ENCODE measurements at regions of chr5 and their contacts with region 1.

Region 1: DNA sequence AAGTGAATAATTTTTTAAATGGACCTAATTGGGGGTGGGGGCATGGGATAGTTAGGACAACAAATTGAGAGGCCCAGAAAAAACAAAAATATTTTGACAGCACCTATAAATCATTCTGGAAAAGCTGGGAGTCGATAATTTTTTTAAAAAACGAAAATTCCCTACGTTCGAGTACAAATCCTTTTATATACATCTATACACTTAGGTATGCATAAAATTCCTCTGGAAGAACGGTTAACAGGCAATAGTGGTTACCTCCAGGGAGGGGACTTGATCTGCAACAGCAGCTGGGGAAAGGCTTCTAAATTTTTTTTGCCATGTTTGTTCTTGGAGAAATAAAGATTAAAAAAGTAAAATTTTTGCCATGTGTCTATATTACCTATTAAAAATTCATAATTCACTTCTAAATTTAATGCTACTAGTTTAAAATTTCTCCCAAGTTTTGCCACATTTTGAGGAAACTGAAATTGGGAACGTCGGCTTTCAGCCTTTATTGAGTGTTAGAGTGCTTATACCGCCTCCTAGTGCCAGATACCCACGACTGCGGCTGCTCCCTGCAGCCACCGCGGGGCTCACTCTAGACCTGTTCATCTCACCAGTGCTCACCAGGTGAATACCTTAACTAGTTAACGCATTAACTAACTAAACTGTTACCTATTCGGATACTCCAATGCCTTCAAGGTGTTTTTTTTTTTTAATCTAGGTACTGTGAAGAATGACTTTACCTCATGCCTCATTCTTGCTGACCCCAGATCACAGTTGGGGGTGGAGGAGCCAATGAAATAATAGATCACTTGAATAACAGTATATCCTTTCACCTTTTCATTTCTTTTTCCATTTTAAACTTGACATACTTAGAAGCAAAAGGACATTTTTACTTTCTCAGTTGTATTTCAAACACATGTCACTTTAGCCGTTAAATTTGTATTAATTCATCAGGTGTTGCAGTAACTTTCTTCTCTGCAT is 1.8 kb upstream of the BHMT start:
- DNase-seq: no peak
- ATAC-seq: peak; percentile 42
- H3K4me3 Mint-ChIP-seq: no peak overlapping the region
- H3K27ac Mint-ChIP-seq: no peak overlapping the region
- H3K4me1 Mint-ChIP-seq: no peaks in the 10 kb centered on the region
- H3K27me3 Mint-ChIP-seq: peaks cover 57% of the 10 kb centered on the region
- CTCF ChIP-seq: no peak

Region 2: GRCh38 chr5:78537821-78538220 is 572.0 kb before region 1 on chr5:
- CTCF ChIA-PET with region 1: no interaction called
- POLR2A ChIA-PET with region 1: no interaction called
- intact Hi-C with region 1: loop called (anchors 5 kb)
- DNase-seq: no peak
- ATAC-seq: peak; percentile 80
- H3K4me3 Mint-ChIP-seq: no peak overlapping the region
- H3K27ac Mint-ChIP-seq: no peak overlapping the region
- H3K4me1 Mint-ChIP-seq: peaks cover 10% of the 10 kb centered on the region
- H3K27me3 Mint-ChIP-seq: no peaks in the 10 kb centered on the region
- CTCF ChIP-seq: no peak

Region 3: GRCh38 chr5:79069488-79070349 is 40.1 kb before region 1 on chr5 and contains the starts of genes BHMT2 and DMGDH:
- CTCF ChIA-PET with region 1: no interaction called
- POLR2A ChIA-PET with region 1: no interaction called
- intact Hi-C with region 1: no loop called
- DNase-seq: no peak
- ATAC-seq: no peak
- H3K4me3 Mint-ChIP-seq: no peak within 1 kb of the TSS
- H3K27ac Mint-ChIP-seq: no peak within 1 kb of the TSS
- H3K4me1 Mint-ChIP-seq: no peaks in the 10 kb centered on the region
- H3K27me3 Mint-ChIP-seq: peaks cover 28% of the 10 kb centered on the region
- CTCF ChIP-seq: no peak
- total RNA-seq, gene BHMT2: not detected in 2 replicates
- total RNA-seq, gene DMGDH: not detected in 2 replicates